ENCODE measurements at regions of chr17 and their contacts with region 1.

Region 1: GRCh38 chr17:64920026-64920418 is 744 bp upstream of the LRRC37A3 start:
- DNase-seq: no peak
- H3K4me3 ChIP-seq: peak overlapping the region; percentile 62
- H3K27ac ChIP-seq: peak overlapping the region; percentile 56; the same call in 1 of the 2 replicates
- H3K4me1 ChIP-seq: peaks cover 8% of the 10 kb centered on the region
- H3K27me3 ChIP-seq: no peaks in the 10 kb centered on the region
- CTCF ChIP-seq: no peak

Region 2: DNA sequence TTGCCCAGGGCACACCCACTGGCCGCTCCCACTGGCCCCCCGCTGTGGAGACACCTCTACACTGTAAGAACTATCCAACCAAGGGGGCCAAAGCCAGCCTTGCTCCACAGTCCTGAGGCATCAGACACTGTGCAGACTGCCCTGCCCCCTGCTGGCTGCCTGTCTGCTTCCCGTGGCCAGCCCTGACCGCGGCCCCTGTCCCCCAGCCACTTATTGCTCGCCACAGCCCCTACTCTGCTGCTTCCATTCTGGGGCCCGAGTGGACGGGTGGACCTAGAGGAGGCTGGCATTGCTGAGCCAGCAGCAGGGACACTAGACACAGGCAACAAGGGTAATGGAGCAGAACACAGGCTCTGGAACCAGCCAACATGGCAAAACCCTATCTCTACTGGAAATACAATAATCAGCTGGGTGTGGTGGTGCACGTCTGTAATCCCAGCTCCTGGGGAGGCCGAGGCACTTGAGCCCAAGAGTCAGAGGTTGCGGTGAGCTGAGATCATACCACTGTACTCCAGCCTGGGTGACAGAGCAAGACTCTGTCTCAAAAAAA is 19.0 kb after region 1 on chr17:
- CTCF ChIA-PET with region 1: interaction called, 10 read pairs
- POLR2A ChIA-PET with region 1: no interaction called
- intact Hi-C with region 1: no loop called
- DNase-seq: peak; percentile 55 to 70
- H3K4me3 ChIP-seq: no peak overlapping the region
- H3K27ac ChIP-seq: peak overlapping the region; percentile 89
- H3K4me1 ChIP-seq: peaks cover 51% of the 10 kb centered on the region
- H3K27me3 ChIP-seq: no peaks in the 10 kb centered on the region
- CTCF ChIP-seq: peak; percentile 75

Measured in PC-9 (cell line).